Calu3 (cell line): ENCODE measurements at regions of chr2 and their contacts with region 1.

Region 1: GRCh38 chr2:36322108-36322507 is 33.5 kb upstream of the CRIM1 start:
- DNase-seq: no peak
- H3K4me3 Mint-ChIP-seq: no peak overlapping the region
- H3K27ac Mint-ChIP-seq: no peak overlapping the region
- H3K4me1 Mint-ChIP-seq: peaks cover 4% of the 10 kb centered on the region
- H3K27me3 Mint-ChIP-seq: no peaks in the 10 kb centered on the region
- CTCF ChIP-seq: no peak

Region 2: GRCh38 chr2:36079793-36080192 is 242.3 kb before region 1 on chr2:
- CTCF ChIA-PET with region 1: no interaction called
- intact Hi-C with region 1: loop called (anchors 10 kb)
- DNase-seq: no peak
- H3K4me3 Mint-ChIP-seq: no peak overlapping the region
- H3K27ac Mint-ChIP-seq: no peak overlapping the region
- H3K4me1 Mint-ChIP-seq: no peaks in the 10 kb centered on the region
- H3K27me3 Mint-ChIP-seq: no peaks in the 10 kb centered on the region
- CTCF ChIP-seq: no peak

Region 3: GRCh38 chr2:36178384-36178783 is 143.7 kb before region 1 on chr2:
- CTCF ChIA-PET with region 1: no interaction called
- intact Hi-C with region 1: loop called (anchors 10 kb)
- DNase-seq: no peak
- H3K4me3 Mint-ChIP-seq: no peak overlapping the region
- H3K27ac Mint-ChIP-seq: no peak overlapping the region
- H3K4me1 Mint-ChIP-seq: peaks cover 33% of the 10 kb centered on the region
- H3K27me3 Mint-ChIP-seq: no peaks in the 10 kb centered on the region
- CTCF ChIP-seq: no peak

Region 4: GRCh38 chr2:36355151-36355889 is 33.2 kb after region 1 on chr2 and contains the start of gene CRIM1:
- CTCF ChIA-PET with region 1: no interaction called
- intact Hi-C with region 1: no loop called
- DNase-seq: peak; percentile 84
- H3K4me3 Mint-ChIP-seq: peak within 1 kb of the TSS; percentile 99
- H3K27ac Mint-ChIP-seq: peak within 1 kb of the TSS; percentile 76
- H3K4me1 Mint-ChIP-seq: peaks cover 43% of the 10 kb centered on the region
- H3K27me3 Mint-ChIP-seq: no peaks in the 10 kb centered on the region
- CTCF ChIP-seq: no peak
- total RNA-seq, gene CRIM1: 48.0 and 57.6 TPM in 2 replicates